HCT116 (cell line): ENCODE measurements at regions of chr9 and their contacts with region 1.

Region 1: GRCh38 chr9:5450359-5451091 is at the start of gene CD274:
- DNase-seq: peak; percentile 80
- ATAC-seq: peak; percentile 99
- H3K4me3 ChIP-seq: peak within 1 kb of the TSS; percentile 51 to 65
- H3K27ac ChIP-seq: no peak within 1 kb of the TSS
- H3K4me1 ChIP-seq: peaks cover 7 to 40% of the 10 kb centered on the region in 2 experiments
- H3K27me3 ChIP-seq: no peaks in the 10 kb centered on the region
- CTCF ChIP-seq: peak; percentile 72 to 75 (median 73)
- POLR2A ChIP-seq: peak; percentile 68
- RAD21 ChIP-seq: peak; percentile 85
- total RNA-seq, gene CD274: 2.5 TPM

Region 2: GRCh38 chr9:5510360-5510931 is 59.9 kb after region 1 on chr9 and contains the start of gene PDCD1LG2:
- CTCF ChIA-PET with region 1: no interaction called
- POLR2A ChIA-PET with region 1: no interaction called
- RAD21 ChIA-PET with region 1: no interaction called
- intact Hi-C with region 1: loop called (anchors 5 kb)
- DNase-seq: no peak
- ATAC-seq: no peak
- H3K4me3 ChIP-seq: no peak within 1 kb of the TSS
- H3K27ac ChIP-seq: no peak within 1 kb of the TSS
- H3K4me1 ChIP-seq: peaks cover 0 to 25% of the 10 kb centered on the region in 2 experiments; a peak in 2 of 4 replicates
- H3K27me3 ChIP-seq: no peaks in the 10 kb centered on the region
- CTCF ChIP-seq: no peak
- POLR2A ChIP-seq: no peak
- RAD21 ChIP-seq: no peak
- total RNA-seq, gene PDCD1LG2: not detected

Region 3: GRCh38 chr9:5593904-5594303 is 143.4 kb after region 1 on chr9:
- CTCF ChIA-PET with region 1: interaction called, 9 read pairs
- POLR2A ChIA-PET with region 1: no interaction called
- RAD21 ChIA-PET with region 1: no interaction called
- intact Hi-C with region 1: loop called (anchors 5 kb)
- DNase-seq: no peak
- ATAC-seq: no peak
- H3K4me3 ChIP-seq: no peak overlapping the region
- H3K27ac ChIP-seq: no peak overlapping the region
- H3K4me1 ChIP-seq: no peaks in the 10 kb centered on the region
- H3K27me3 ChIP-seq: no peaks in the 10 kb centered on the region
- CTCF ChIP-seq: no peak
- POLR2A ChIP-seq: no peak
- RAD21 ChIP-seq: no peak

Region 4: DNA sequence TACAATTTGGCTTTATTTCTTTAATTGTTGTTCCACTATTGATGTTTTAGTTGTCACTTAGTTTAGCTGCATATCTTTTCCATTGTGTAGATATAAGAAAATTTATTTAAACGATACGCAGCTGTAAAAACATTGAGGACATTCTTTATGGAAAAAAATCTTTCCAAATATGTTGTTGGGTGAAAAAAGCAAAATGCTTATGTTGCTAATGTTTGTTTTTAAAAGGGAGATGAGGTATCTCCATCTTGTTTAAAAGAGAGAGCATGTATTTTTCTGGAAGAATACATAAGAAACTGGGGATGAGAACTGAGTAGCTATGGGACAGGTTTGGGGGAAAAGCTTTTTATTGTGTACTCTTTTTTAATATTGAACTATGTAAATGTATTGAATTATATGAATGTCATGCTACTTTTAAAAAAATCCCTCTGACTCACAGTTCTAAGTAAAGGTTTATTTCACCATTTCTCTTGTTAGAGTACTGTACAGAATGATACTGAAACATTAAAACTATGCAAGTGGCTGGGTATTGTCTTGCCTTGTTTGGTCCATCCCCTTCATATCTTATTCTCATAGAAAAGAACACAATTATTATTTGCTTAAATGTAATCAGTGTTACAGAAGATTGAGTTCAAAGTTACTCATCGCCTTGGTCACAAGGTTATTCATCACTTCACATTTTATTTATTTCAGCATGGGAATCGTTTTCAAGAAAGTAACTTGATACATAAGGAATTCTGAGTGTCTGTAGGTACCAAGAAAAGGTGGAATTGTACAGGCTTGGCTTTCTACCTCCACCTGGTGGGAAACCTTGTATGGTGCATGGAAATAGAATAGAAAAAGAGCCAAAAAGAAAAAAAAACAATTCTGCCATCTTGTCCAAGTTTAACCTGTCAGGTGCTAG is 264.2 kb after region 1 on chr9:
- CTCF ChIA-PET with region 1: no interaction called
- POLR2A ChIA-PET with region 1: no interaction called
- RAD21 ChIA-PET with region 1: no interaction called
- intact Hi-C with region 1: loop called (anchors 10 kb)
- DNase-seq: peak; percentile 27
- ATAC-seq: peak; percentile 72
- H3K4me3 ChIP-seq: no peak overlapping the region
- H3K27ac ChIP-seq: no peak overlapping the region
- H3K4me1 ChIP-seq: no peaks in the 10 kb centered on the region
- H3K27me3 ChIP-seq: no peaks in the 10 kb centered on the region
- CTCF ChIP-seq: peak; percentile 48 to 67 (median 64); a peak in 5 of 6 replicates
- POLR2A ChIP-seq: no peak
- RAD21 ChIP-seq: peak; percentile 73